Activated CD4-positive, alpha-beta memory T cell treated with anti-CD3 and anti-CD28 coated beads, Interleukin-2, amount 10 ng/mL, durations not matched to agents 7 days and 5 days (primary cell): ENCODE measurements at regions of chr3 and their contacts with region 1.

Region 1: DNA sequence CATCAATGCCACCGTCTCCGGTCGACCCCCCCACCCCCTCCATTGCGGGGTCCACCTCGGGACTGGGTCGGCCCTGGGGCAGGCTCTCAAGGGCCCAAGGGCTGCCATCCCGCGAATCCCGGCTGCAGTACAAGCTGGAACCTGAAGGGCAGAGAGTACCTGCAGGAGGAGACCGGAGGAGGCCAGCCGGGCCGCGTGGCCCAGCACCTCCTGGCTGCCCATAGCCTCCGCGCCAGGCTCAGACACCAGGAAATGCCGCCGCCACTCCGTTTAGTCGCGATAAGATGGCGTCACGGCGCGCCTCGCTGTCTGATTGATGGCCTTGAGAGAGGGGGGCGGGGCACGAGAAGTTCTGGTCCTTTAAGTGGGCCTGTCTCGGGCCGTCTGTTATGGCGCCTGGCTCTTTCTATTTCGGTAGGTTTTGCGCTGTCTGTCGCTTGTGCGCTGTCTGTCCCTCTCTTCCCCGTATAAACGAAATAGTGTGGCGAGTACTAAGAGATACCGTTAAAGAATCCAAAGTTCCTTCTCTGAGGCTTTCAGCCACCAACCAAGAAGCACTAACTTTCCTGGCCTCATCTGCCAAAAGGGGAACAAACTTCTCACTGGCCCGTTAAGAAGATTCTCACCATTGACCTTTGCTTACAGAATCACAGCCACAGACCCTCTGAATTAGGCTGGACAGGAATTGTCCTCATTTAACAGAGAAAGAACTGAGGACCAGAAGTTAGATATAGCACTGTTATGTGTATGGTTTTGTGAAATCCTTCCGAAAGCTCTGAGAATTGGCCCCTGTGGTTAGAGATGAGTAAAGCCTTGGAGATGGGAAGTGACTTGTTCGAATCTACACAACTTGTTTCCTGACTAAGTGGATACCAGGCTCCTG is at the start of gene RFT1:
- DNase-seq: peak; percentile 99
- H3K4me3 Mint-ChIP-seq: peak within 1 kb of the TSS; percentile 83
- H3K27ac Mint-ChIP-seq: peak within 1 kb of the TSS; percentile 84
- H3K4me1 Mint-ChIP-seq: peaks cover 29% of the 10 kb centered on the region
- H3K27me3 Mint-ChIP-seq: no peaks in the 10 kb centered on the region
- total RNA-seq, gene RFT1: 26.4 to 27.6 TPM

Region 2: GRCh38 chr3:53114011-53114400 is 16.4 kb before region 1 on chr3:
- CTCF ChIA-PET with region 1: interaction called, 85 read pairs
- POLR2A ChIA-PET with region 1: interaction called, 31 read pairs
- DNase-seq: peak; percentile 86
- H3K4me3 Mint-ChIP-seq: no peak overlapping the region
- H3K27ac Mint-ChIP-seq: no peak overlapping the region
- H3K4me1 Mint-ChIP-seq: peaks cover 20% of the 10 kb centered on the region
- H3K27me3 Mint-ChIP-seq: no peaks in the 10 kb centered on the region

Region 3: GRCh38 chr3:53120336-53120735 is 10.1 kb before region 1 on chr3:
- CTCF ChIA-PET with region 1: interaction called, 85 read pairs
- POLR2A ChIA-PET with region 1: interaction called, 31 read pairs
- DNase-seq: no peak
- H3K4me3 Mint-ChIP-seq: no peak overlapping the region
- H3K27ac Mint-ChIP-seq: no peak overlapping the region
- H3K4me1 Mint-ChIP-seq: no peaks in the 10 kb centered on the region
- H3K27me3 Mint-ChIP-seq: no peaks in the 10 kb centered on the region

Region 4: GRCh38 chr3:53160660-53161449 is 30.4 kb after region 1 on chr3 and contains the start of gene PRKCD:
- CTCF ChIA-PET with region 1: interaction called, 11 read pairs
- POLR2A ChIA-PET with region 1: interaction called, 8 read pairs
- DNase-seq: peak; percentile 83
- H3K4me3 Mint-ChIP-seq: peak within 1 kb of the TSS; percentile 86
- H3K27ac Mint-ChIP-seq: peak within 1 kb of the TSS; percentile 68
- H3K4me1 Mint-ChIP-seq: peaks cover 21% of the 10 kb centered on the region
- H3K27me3 Mint-ChIP-seq: peaks cover 31% of the 10 kb centered on the region
- total RNA-seq, gene PRKCD: 23.4 to 24.8 TPM